ENCODE measurements at regions of chr2 and their contacts with region 1.

Region 1: DNA sequence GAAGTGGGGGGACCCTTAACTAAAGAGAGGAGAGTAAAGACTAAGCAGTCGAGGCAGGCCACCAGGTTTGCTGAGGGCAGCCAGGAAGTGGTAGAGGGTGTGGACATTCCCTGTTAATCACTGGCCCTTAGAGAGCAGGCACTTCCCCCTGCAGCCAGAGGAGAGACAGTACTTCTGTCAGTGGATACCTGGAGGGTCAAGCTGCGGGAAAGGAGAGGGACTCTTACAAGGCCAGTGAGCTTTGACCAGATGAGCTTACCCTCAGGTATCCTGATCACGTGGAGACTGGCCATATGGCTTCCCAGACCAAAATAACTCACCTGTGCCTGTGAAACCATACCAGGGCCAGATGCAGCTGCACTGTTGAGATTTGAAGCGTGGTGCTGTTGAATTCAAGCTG is 28.6 kb downstream of the ITGA6 start:
- DNase-seq: peak; percentile 63 to 71
- H3K4me3 ChIP-seq: no peak overlapping the region
- H3K27ac ChIP-seq: peak overlapping the region; percentile 67
- H3K4me1 ChIP-seq: peaks cover 73% of the 10 kb centered on the region
- H3K27me3 ChIP-seq: no peaks in the 10 kb centered on the region
- CTCF ChIP-seq: no peak

Region 2: DNA sequence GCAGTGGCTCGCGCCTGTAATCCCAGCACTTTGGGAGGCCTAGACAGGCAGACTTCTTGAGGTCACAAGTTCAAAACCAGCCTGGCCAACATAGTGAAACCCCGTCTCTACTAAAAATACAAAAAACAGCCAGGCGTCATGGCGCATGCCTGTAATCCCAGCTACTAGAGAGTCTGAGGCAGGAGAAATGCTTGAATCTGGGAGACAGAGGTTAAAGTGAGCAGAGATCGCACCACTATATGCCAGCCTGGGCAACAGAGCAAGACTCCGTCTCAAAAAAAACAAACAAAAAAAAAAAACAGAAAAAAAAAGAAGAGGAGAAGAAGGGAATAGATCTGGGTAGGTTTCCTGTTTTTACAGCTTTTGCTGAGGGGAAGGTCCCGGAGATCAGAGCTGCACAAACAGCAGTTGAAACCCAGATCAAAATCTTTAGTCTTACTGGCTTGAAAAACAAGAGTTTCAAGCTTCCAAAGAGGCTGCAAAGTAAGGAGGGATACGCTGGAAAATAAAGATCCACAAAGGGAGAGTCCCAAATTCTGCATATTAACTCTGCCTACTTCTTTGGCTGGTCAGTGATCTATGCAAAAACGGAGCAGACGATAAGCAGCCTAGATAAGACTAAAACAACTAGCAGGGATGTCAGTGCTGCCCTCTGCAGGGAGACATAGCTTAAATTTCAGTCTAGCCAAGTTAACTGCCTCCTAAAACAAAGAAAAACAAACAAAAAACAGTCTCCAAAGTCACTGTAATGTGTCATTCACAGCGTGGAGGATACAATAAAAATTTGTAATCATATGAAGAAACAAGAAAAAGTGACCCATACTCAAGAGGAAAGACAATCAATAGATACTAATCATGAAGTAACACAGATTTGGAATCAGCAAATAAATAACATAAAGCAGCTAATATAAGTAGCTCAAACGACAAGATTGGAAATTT is 1369.4 kb before region 1 on chr2:
- CTCF ChIA-PET with region 1: interaction called, 40 read pairs
- POLR2A ChIA-PET with region 1: no interaction called
- intact Hi-C with region 1: no loop called
- DNase-seq: peak; percentile 52 to 59
- H3K4me3 ChIP-seq: no peak overlapping the region
- H3K27ac ChIP-seq: no peak overlapping the region
- H3K4me1 ChIP-seq: no peaks in the 10 kb centered on the region
- H3K27me3 ChIP-seq: no peaks in the 10 kb centered on the region
- CTCF ChIP-seq: peak; percentile 84

Region 3: DNA sequence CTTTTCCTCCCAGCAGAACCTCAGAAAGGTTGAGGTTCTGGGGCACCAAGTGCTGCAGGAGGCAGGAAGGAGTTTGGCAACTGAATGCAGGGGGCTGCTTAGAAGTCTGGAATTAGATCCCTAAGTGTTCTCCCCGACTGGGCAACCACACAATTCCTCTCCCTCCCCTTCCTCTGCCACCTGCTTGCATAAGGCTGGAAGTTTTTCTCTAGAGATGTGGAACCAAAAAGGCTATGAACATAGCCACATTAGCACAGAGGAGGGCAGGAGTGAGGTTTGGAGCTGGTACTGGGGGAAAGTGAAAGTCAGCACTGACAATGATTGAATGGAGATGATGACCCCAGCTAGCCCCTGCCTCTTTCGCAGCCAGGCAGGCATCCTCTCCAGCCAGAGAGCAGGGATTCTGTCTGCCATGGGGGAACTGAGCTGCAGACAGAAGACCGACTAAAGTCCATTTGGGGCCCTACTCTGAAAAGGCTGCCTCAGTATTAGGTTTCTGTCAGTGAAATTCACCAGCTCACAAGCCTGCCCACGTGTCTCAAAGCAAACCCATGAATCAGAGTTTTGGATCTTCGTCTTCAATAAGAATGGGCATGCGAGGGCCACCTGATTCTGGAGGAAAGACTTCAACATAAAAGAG is 116.5 kb before region 1 on chr2:
- CTCF ChIA-PET with region 1: interaction called, 10 read pairs
- POLR2A ChIA-PET with region 1: no interaction called
- intact Hi-C with region 1: no loop called
- DNase-seq: no peak
- H3K4me3 ChIP-seq: no peak overlapping the region
- H3K27ac ChIP-seq: no peak overlapping the region
- H3K4me1 ChIP-seq: peaks cover 8% of the 10 kb centered on the region
- H3K27me3 ChIP-seq: no peaks in the 10 kb centered on the region
- CTCF ChIP-seq: no peak

Region 4: GRCh38 chr2:172442072-172442895 is 13.7 kb before region 1 on chr2:
- CTCF ChIA-PET with region 1: interaction called, 88 read pairs
- POLR2A ChIA-PET with region 1: interaction called, 4 read pairs
- intact Hi-C with region 1: loop called (anchors 1 kb)
- DNase-seq: peak; percentile 100
- H3K4me3 ChIP-seq: peak overlapping the region; percentile 5; the same call in 1 of the 2 replicates
- H3K27ac ChIP-seq: peak overlapping the region; percentile 81
- H3K4me1 ChIP-seq: peaks cover 80% of the 10 kb centered on the region
- H3K27me3 ChIP-seq: no peaks in the 10 kb centered on the region
- CTCF ChIP-seq: no peak